Gastrocnemius medialis (tissue), 4 donors: ENCODE measurements at regions of chr15 and their contacts with region 1.

Region 1: GRCh38 chr15:98647774-98648653 is at the start of gene IGF1R:
- DNase-seq: peak; percentile 62 to 72
- ATAC-seq: peak; percentile 83 to 84
- H3K4me3 ChIP-seq: peak within 1 kb of the TSS; percentile 80 to 97 (median 88)
- H3K27ac ChIP-seq: peak within 1 kb of the TSS; percentile 86 to 92 (median 90)
- H3K4me1 ChIP-seq: peaks cover 0 to 7% of the 10 kb centered on the region in 2 donors
- H3K27me3 ChIP-seq: peaks cover 12 to 34% (median 28%) of the 10 kb centered on the region in 3 donors
- CTCF ChIP-seq: peak in 4 of 5 experiments; percentile 17 to 49 (median 25)
- POLR2A ChIP-seq: peak; percentile 70 to 85
- total RNA-seq, gene IGF1R: 10.1 to 50.4 (median 12.3) TPM

Region 2: DNA sequence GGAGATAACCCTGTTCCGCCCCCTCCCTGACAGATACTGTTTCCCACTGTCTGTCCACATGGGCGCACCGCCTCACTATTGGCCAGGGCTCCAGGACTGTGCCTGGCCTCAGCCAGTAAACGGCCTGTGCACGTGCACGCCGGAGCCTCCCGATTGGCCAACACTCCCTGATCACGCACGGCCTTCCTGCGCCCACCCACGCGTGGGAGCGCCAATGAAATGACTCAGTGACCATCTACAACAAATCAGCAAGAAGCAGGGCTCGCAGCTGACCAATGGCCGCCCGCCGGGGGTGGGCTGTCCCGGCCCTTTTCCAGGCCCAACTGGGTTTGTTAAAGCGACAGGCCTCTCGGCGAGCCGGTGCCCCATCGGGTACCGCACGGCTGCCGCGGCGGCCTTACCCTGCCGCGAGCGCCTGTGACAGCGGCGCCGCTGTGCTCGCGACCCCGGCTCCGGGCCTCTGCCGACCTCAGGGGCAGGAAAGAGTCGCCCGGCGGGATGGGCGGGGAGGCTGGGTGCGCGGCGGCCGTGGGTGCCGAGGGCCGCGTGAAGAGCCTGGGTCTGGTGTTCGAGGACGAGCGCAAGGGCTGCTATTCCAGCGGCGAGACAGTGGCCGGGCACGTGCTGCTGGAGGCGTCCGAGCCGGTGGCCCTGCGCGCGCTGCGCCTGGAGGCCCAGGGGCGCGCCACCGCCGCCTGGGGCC is 687.5 kb before region 1 on chr15 and contains the start of gene ARRDC4:
- in situ Hi-C with region 1: no loop called
- intact Hi-C with region 1: loop called (anchors 5 kb)
- DNase-seq: peak; percentile 100
- ATAC-seq: peak; percentile 93 to 96
- H3K4me3 ChIP-seq: peak within 1 kb of the TSS; percentile 75 to 98 (median 94)
- H3K27ac ChIP-seq: peak within 1 kb of the TSS; percentile 80 to 97 (median 96)
- H3K4me1 ChIP-seq: peaks cover 23 to 29% of the 10 kb centered on the region in 2 donors
- H3K27me3 ChIP-seq: no peaks in the 10 kb centered on the region
- CTCF ChIP-seq: no peak
- POLR2A ChIP-seq: peak; percentile 85 to 94
- total RNA-seq, gene ARRDC4: 11.7 to 20.6 (median 17.7) TPM

Region 3: GRCh38 chr15:98548154-98548971 is 99.7 kb before region 1 on chr15:
- in situ Hi-C with region 1: no loop called
- intact Hi-C with region 1: loop called (anchors 2 kb)
- DNase-seq: peak; percentile 32 to 34
- ATAC-seq: peak; percentile 84 to 89
- H3K4me3 ChIP-seq: peak overlapping the region; percentile 54 to 70 (median 59)
- H3K27ac ChIP-seq: peak overlapping the region; percentile 43 to 60 (median 58)
- H3K4me1 ChIP-seq: peaks cover 4 to 17% of the 10 kb centered on the region in 2 donors
- H3K27me3 ChIP-seq: peaks cover 11 to 27% (median 15%) of the 10 kb centered on the region in 3 donors
- CTCF ChIP-seq: peak in 1 of 5 experiments; percentile 17
- POLR2A ChIP-seq: peak in 1 of 2 donors; percentile 55

Region 4: GRCh38 chr15:98727115-98728085 is 79.4 kb after region 1 on chr15:
- in situ Hi-C with region 1: no loop called
- intact Hi-C with region 1: loop called (anchors 5 kb)
- DNase-seq: peak; percentile 67 to 84
- ATAC-seq: peak; percentile 84 to 94
- H3K4me3 ChIP-seq: peak overlapping the region in 1 of 4 donors; percentile 18
- H3K27ac ChIP-seq: peak overlapping the region; percentile 63 to 73 (median 72)
- H3K4me1 ChIP-seq: peaks cover 41 to 52% of the 10 kb centered on the region in 2 donors
- H3K27me3 ChIP-seq: no peaks in the 10 kb centered on the region
- CTCF ChIP-seq: no peak
- POLR2A ChIP-seq: no peak

Region 5: GRCh38 chr15:98771541-98771940 is 123.5 kb after region 1 on chr15:
- in situ Hi-C with region 1: no loop called
- intact Hi-C with region 1: no loop called
- DNase-seq: no peak
- ATAC-seq: no peak
- H3K4me3 ChIP-seq: no peak overlapping the region
- H3K27ac ChIP-seq: no peak overlapping the region
- H3K4me1 ChIP-seq: peaks cover 2 to 22% of the 10 kb centered on the region in 2 donors
- H3K27me3 ChIP-seq: no peaks in the 10 kb centered on the region
- CTCF ChIP-seq: no peak
- POLR2A ChIP-seq: no peak

Region 6: GRCh38 chr15:98853161-98853560 is 205.1 kb after region 1 on chr15:
- in situ Hi-C with region 1: loop called in 1 of 4 experiments (anchors 10 kb)
- intact Hi-C with region 1: loop called (anchors 1 kb)
- DNase-seq: peak; percentile 60 to 80
- ATAC-seq: peak; percentile 76 to 83
- H3K4me3 ChIP-seq: peak overlapping the region; percentile 63 to 90 (median 80)
- H3K27ac ChIP-seq: peak overlapping the region; percentile 78 to 82 (median 80)
- H3K4me1 ChIP-seq: peaks cover 18 to 51% of the 10 kb centered on the region in 2 donors
- H3K27me3 ChIP-seq: no peaks in the 10 kb centered on the region
- CTCF ChIP-seq: peak in 3 of 5 experiments; percentile 6 to 15 (median 13)
- POLR2A ChIP-seq: no peak

Region 7: GRCh38 chr15:99928429-99928981 is 1280.5 kb after region 1 on chr15:
- in situ Hi-C with region 1: no loop called
- intact Hi-C with region 1: no loop called
- DNase-seq: peak; percentile 64
- ATAC-seq: peak; percentile 88 to 91
- H3K4me3 ChIP-seq: peak overlapping the region; percentile 32 to 76 (median 46)
- H3K27ac ChIP-seq: peak overlapping the region; percentile 39 to 84 (median 61)
- H3K4me1 ChIP-seq: peaks cover 0 to 6% of the 10 kb centered on the region in 2 donors
- H3K27me3 ChIP-seq: no peaks in the 10 kb centered on the region
- CTCF ChIP-seq: peak; percentile 25 to 78 (median 72)
- POLR2A ChIP-seq: no peak